ENCODE measurements at regions of chr20 and their contacts with region 1.

Region 1: DNA sequence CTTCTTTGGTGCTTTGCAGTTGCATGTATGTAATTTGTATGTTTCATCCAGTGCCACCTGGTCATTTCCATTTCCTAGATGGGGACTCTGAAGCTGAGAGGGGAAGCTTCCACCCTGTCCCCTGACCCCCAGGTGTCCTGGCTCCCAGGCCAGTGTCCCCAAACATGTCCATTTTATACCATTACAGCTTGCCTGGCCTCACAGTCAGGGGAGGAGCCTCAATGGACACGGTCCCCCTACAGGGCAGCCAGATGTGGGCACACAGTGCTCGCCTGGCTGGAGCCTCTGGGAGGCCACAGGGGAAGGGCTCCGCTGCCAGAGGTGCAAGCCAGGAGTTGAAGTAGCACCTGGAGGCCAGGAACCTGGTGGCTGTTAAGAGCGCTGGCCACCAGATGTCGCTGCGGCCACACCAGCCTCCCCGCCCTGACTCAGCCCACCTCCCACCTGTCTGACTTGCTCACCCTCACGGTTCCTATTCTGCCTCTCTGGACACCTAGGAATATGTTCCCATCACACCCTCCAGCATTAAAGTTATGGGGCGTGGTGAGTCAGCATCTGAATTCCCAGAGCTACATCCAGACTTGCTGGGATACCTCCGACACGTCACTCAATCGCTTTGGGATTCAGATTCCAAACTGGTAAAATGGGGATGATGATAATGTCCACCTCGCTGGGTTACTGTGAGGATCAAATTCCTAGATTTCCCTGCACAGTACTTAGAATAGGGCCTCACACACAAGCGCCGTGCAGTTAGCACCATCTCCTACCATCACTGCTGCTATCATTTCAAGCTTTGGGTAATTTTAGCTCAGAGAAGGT is 107.4 kb downstream of the SULF2 start:
- DNase-seq: peak in 4 of 5 donors; percentile 39 to 68 (median 64)
- H3K4me3 ChIP-seq: no peak overlapping the region
- H3K27ac ChIP-seq: no peak overlapping the region
- H3K4me1 ChIP-seq: peaks cover 7% of the 10 kb centered on the region
- H3K27me3 ChIP-seq: no peaks in the 10 kb centered on the region
- CTCF ChIP-seq: peak; percentile 40 to 70 (median 56)
- EP300 ChIP-seq: no peak
- POLR2A ChIP-seq: no peak

Region 2: DNA sequence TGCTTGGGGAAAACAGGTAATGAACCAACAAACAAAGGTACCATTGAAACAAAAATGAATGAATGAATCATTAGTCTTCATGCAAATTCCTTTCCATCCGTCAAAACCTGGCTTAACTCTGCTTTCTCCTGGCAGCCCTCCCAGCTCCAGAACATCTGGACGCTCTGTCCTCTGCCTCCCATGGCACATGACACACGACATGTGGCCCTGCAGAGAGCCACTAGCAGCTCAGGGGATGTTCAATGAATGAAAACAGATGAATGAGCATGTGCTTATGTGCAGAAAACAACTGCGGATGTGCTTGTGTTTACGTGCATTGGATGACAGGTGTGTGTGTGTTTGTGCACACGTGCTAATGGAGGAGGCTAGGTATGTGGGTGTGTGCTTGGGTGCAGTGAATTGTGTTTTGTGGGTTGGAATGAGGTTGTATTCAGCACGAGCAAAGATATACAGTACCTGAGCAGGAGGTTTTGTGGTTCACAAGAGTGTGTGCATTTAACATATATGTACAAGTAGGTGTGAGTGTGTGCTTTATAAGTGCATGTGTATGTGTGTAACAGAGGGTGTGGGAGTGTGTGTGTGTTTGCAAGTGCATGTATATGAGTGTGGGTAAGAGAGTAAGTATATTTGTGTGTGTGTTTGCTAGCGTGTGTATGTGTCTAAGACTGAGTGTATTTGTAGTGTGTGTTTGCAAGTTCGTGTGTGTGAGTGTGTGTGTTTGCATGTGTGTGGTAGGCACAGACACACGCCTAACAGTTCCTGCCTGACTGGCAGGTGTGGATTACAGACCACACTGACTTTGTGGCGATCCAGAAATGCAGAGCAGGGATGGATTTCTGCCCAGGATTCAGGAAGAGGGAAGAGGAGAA is 481.6 kb after region 1 on chr20:
- intact Hi-C with region 1: loop called in 1 of 4 experiments (anchors 10 kb)
- DNase-seq: no peak
- H3K4me3 ChIP-seq: no peak overlapping the region
- H3K27ac ChIP-seq: no peak overlapping the region
- H3K4me1 ChIP-seq: peaks cover 3% of the 10 kb centered on the region
- H3K27me3 ChIP-seq: no peaks in the 10 kb centered on the region
- CTCF ChIP-seq: no peak
- EP300 ChIP-seq: no peak
- POLR2A ChIP-seq: no peak

Region 3: GRCh38 chr20:48295445-48295963 is 617.7 kb after region 1 on chr20:
- intact Hi-C with region 1: loop called in 1 of 4 experiments (anchors 10 kb)
- DNase-seq: peak in 1 of 5 donors; percentile 49
- H3K4me3 ChIP-seq: no peak overlapping the region
- H3K27ac ChIP-seq: no peak overlapping the region
- H3K4me1 ChIP-seq: peaks cover 10% of the 10 kb centered on the region
- H3K27me3 ChIP-seq: no peaks in the 10 kb centered on the region
- CTCF ChIP-seq: peak in 2 of 3 donors; percentile 38 to 45
- EP300 ChIP-seq: no peak
- POLR2A ChIP-seq: no peak

Measured in ovary (tissue), 10 donors.